Mammary epithelial cell (primary cell): ENCODE measurements at regions of chr17 and their contacts with region 1.

Region 1: GRCh38 chr17:41773190-41773588 is 13.3 kb downstream of the JUP start:
- DNase-seq: peak; percentile 99
- H3K4me3 ChIP-seq: no peak overlapping the region
- H3K27ac ChIP-seq: peak overlapping the region; percentile 93
- H3K4me1 ChIP-seq: peaks cover 63% of the 10 kb centered on the region
- H3K27me3 ChIP-seq: no peaks in the 10 kb centered on the region
- CTCF ChIP-seq: no peak

Region 2: DNA sequence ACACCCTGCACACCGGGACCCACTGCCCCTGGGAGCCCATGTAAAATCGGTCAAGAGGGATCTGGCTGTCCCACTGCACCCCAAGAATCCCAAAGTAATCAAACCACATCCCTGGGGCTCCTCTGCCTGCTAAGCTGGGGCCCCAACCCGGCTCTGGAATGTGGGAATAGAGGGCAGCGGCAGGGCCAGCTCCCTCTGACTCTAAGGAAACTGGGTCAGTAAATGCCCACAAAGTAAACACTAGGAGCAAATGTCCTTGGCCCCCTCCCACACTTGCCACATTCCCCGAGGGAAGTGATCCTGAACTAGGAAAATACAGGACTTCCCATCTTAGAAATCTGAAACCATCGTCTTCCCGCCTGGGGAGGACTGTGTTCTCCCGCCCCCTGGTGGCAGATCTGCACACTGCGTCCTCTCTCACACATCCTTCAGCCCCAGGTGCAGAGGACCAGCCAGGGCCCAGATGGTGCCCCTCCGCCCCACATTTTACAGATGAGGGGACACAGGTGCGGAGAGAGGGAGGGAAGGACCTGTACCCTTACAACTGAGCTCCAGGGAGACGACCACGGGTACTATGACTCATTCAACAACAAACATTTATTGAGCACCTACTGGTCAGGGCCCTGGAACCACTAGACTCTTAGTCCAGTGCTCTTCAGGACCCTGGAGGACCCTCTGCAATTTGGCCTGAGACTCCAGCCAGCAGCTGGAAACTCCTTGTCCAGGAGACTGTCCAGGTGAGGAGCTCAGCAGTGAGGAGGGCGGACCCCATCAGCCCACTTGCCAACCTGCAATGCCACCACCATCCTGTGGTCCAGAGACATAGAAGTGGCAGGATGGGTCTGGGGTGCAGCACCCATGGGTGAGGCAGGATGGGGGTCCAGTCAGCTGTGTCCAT is 28.4 kb after region 1 on chr17:
- CTCF ChIA-PET with region 1: no interaction called
- dilution Hi-C with region 1: no loop called
- in situ Hi-C with region 1: no loop called
- intact Hi-C with region 1: loop called (anchors 1 kb)
- DNase-seq: peak; percentile 76
- H3K4me3 ChIP-seq: peak overlapping the region in 1 of 3 experiments; percentile 22
- H3K27ac ChIP-seq: peak overlapping the region; percentile 93
- H3K4me1 ChIP-seq: peaks cover 23% of the 10 kb centered on the region
- H3K27me3 ChIP-seq: no peaks in the 10 kb centered on the region
- CTCF ChIP-seq: peak; percentile 96 to 98

Region 3: DNA sequence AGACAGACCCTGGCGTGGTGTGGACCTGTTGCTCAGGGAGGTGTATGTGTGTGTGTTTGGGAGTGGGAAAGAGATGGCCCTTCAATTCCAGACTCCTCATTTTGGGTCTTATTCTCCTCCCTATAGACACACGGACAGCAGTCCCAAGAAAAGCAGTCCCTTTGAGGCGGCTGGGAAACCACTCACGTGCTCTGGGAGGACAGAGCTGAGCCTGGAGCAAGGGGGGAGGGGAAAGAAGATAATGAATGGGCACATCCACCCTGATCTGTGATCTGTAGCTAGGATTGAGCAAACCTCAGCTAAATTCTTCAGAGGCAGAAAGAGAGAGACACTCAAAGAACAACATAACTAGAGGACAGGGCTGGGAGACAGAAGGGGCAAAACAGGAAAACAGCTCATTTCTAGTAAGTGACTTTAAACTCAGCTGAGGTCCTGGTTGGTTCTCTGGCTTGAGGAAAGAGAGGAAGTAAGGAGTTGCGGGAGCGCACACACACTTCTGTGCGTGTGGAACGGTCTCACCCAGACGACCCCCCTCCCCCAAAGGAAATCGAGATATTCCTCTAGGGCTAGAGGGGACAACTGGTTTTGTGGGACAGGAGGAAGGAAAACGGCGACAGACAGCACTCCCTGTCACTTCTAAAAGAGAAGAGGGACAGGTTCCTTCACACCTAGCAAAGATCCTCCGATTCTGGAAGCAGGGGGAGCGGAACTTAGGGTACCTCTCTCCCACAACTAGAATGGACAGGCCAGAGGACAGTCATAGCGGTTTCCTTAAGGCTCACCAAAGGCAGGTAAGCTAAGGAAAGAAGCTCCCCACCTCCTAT is 380.9 kb after region 1 on chr17:
- CTCF ChIA-PET with region 1: no interaction called
- dilution Hi-C with region 1: no loop called
- in situ Hi-C with region 1: no loop called
- intact Hi-C with region 1: no loop called
- DNase-seq: no peak
- H3K4me3 ChIP-seq: peak overlapping the region; percentile 57 to 80 (median 69)
- H3K27ac ChIP-seq: peak overlapping the region; percentile 37
- H3K4me1 ChIP-seq: peaks cover 10% of the 10 kb centered on the region
- H3K27me3 ChIP-seq: no peaks in the 10 kb centered on the region
- CTCF ChIP-seq: no peak